ENCODE measurements at regions of chr2 and their contacts with region 1.

Region 1: GRCh38 chr2:202265467-202266277 is at the start of gene NOP58:
- DNase-seq: peak; percentile 94 to 98
- H3K4me3 ChIP-seq: peak within 1 kb of the TSS; percentile 83
- CTCF ChIP-seq: no peak
- POLR2A ChIP-seq: peak in 1 of 2 donors; percentile 90
- total RNA-seq, gene NOP58: 39.5 to 80.5 (median 50.8) TPM

Region 2: DNA sequence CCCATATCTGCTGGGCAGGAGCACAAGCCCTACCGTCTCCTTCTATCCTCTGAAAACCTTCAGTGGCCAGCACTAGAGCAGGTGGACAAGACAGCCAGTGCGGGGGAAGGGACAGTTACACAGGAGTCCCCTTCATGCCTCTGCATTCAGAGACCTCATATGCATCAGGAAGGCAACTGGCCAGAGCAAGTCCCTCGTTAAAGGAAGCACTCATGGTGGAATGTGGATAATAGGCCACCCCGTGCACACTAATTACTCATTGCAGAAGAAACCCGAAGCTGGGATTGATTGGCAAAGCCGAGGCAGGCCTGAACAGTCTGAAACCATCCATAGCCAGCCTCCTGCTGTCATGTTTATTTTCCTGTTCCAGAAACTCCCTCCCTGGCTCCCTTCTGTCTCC is 181.4 kb before region 1 on chr2:
- intact Hi-C with region 1: loop called (anchors 5 kb)
- DNase-seq: no peak
- H3K4me3 ChIP-seq: no peak overlapping the region
- CTCF ChIP-seq: no peak
- POLR2A ChIP-seq: no peak

Measured in lower leg skin (tissue), 4 donors.